ENCODE measurements at regions of chr16 and their contacts with region 1.

Region 1: DNA sequence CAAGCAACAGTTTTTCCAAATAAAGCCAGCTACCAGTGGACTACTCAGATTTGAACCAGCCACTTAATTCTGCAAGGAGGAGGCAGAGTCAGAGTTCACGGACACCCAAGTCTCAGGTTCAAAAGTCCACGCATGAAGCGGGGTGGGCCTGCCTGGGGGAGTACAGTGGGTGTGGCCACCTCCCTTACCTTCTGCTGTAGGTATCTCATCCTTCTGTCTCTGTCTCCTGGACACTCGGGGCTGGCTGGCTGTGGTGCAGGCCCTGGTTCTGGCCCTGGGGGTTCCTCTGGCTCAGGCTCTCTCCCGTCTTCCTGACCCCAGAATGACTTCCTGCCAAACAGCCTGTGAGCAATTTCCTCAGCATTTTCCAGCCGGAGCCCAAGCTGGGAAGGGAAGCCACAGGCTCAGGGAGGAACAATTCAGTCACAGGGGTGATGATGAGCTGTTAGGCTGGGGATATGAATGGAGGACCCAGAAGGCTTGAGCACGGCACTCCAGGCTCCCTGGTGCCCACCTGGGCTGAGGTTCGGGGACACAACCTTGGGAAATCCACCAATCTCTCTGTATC is 101.9 kb downstream of the LITAF start:
- DNase-seq: no peak

Region 2: GRCh38 chr16:11431915-11432465 is 52.8 kb before region 1 on chr16:
- intact Hi-C with region 1: loop called (anchors 5 kb)
- DNase-seq: no peak

Region 3: GRCh38 chr16:11456741-11457140 is 28.0 kb before region 1 on chr16:
- intact Hi-C with region 1: loop called (anchors 2 kb)
- DNase-seq: no peak

Region 4: GRCh38 chr16:11586856-11587642 is 102.3 kb after region 1 on chr16 and contains the start of gene LITAF:
- intact Hi-C with region 1: no loop called
- DNase-seq: peak; percentile 84
- total RNA-seq, gene LITAF: 40.5 TPM

Measured in cardiac septum (tissue), 1 donor.